AG04450 (cell line): ENCODE measurements at regions of chr1 and their contacts with region 1.

Region 1: GRCh38 chr1:93061895-93062792 is 16.9 kb upstream of the MTF2 start:
- DNase-seq: no peak
- H3K4me3 ChIP-seq: no peak overlapping the region
- H3K27ac ChIP-seq: no peak overlapping the region
- H3K27me3 ChIP-seq: peaks cover 16% of the 10 kb centered on the region
- CTCF ChIP-seq: peak; percentile 47

Region 2: GRCh38 chr1:93021539-93022134 is 40.5 kb before region 1 on chr1:
- CTCF ChIA-PET with region 1: interaction called, 36 read pairs
- POLR2A ChIA-PET with region 1: no interaction called
- DNase-seq: no peak
- H3K4me3 ChIP-seq: no peak overlapping the region
- H3K27ac ChIP-seq: no peak overlapping the region
- H3K27me3 ChIP-seq: peaks cover 18% of the 10 kb centered on the region
- CTCF ChIP-seq: peak; percentile 82